ENCODE measurements at regions of chr7 and their contacts with region 1.

Region 1: GRCh38 chr7:131107337-131108211 is 220.1 kb upstream of the MKLN1 start:
- DNase-seq: peak; percentile 57
- ATAC-seq: peak; percentile 40
- H3K4me3 ChIP-seq: peak overlapping the region; percentile 68 to 94
- H3K27ac ChIP-seq: peak overlapping the region; percentile 98
- H3K4me1 ChIP-seq: peaks cover 36% of the 10 kb centered on the region
- H3K27me3 ChIP-seq: no peaks in the 10 kb centered on the region
- CTCF ChIP-seq: no peak

Region 2: DNA sequence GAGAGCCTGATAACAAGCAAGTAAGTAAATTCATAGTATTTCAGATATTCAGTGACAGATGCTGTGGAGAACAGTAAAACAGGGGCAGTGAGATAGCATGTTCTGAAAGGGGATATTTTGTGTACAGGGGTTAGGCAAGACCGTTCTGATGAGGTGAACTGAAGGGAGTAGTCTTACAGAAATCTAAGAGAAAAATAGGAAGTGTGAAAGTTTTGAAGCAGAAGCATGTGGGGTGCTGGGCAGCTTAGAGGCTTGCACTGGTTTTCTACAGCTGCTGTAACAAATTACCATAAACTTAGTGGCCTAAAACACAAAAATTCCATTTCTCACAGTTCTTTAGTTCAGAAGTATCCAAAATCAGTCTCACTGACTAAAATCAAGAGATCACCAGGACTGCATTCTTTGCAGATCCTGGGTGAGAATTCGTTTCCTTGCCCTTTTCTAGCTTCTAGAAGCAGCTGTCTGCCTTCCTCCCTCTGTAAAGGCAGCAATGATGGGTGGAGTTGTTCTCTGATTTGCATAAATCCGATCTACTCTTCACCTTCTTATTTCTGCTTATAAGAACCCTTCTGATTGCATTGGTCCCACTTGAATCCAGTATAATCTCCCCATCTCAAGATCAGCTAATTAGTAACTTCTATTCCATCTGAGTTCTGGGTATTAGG is 366.1 kb before region 1 on chr7:
- CTCF ChIA-PET with region 1: no interaction called
- POLR2A ChIA-PET with region 1: no interaction called
- in situ Hi-C with region 1: no loop called
- intact Hi-C with region 1: no loop called
- DNase-seq: no peak
- ATAC-seq: no peak
- H3K4me3 ChIP-seq: no peak overlapping the region
- H3K27ac ChIP-seq: no peak overlapping the region
- H3K4me1 ChIP-seq: no peaks in the 10 kb centered on the region
- H3K27me3 ChIP-seq: peaks cover 68% of the 10 kb centered on the region
- CTCF ChIP-seq: no peak

Region 3: GRCh38 chr7:131302876-131303707 is 195.5 kb after region 1 on chr7:
- CTCF ChIA-PET with region 1: no interaction called
- POLR2A ChIA-PET with region 1: no interaction called
- in situ Hi-C with region 1: no loop called
- intact Hi-C with region 1: loop called (anchors 5 kb)
- DNase-seq: no peak
- ATAC-seq: peak; percentile 83
- H3K4me3 ChIP-seq: no peak overlapping the region
- H3K27ac ChIP-seq: no peak overlapping the region
- H3K4me1 ChIP-seq: peaks cover 5% of the 10 kb centered on the region; the same call in 1 of the 2 replicates
- H3K27me3 ChIP-seq: no peaks in the 10 kb centered on the region
- CTCF ChIP-seq: peak; percentile 81

Region 4: DNA sequence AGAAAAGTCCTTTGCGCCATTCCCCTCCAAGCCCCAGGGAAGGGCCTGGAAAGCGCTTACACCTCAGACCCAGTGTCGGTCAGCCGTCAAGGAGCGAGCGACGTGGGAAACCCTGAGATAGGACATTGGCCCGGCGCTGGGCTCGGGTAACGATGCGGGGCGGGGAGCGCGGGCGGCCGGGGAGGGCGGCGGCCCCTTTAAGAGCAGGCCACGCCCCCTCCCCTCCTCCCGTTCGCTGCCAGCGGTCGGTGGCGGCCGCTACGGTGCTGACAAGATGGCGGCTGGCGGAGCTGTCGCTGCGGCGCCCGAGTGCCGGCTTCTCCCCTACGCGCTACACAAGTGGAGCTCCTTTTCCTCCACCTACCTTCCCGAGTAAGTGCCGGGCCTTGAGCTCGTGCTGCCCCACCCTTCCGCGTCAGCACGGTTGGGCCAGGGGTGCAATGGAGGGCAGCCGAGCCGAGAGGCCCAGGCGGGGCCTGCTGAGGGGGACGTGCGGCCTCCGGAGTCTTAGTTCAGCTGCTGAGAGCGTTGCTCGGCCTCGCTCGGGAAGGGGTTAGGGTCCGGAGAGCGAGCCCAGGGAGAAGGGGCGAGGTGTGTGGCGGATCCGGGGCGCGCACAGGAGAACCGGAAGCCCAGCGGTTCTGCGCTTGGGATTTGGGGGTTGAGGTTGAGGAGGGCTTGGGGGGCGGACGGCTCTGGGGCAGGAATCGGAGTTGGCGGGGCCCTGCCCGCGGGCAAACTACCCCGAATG is 220.2 kb after region 1 on chr7 and contains the start of gene MKLN1:
- CTCF ChIA-PET with region 1: no interaction called
- POLR2A ChIA-PET with region 1: interaction called, 4 read pairs
- in situ Hi-C with region 1: no loop called
- intact Hi-C with region 1: loop called (anchors 2 kb)
- DNase-seq: peak; percentile 53
- ATAC-seq: peak; percentile 96
- H3K4me3 ChIP-seq: peak within 1 kb of the TSS; percentile 85 to 93
- H3K27ac ChIP-seq: peak within 1 kb of the TSS; percentile 98
- H3K4me1 ChIP-seq: peaks cover 43% of the 10 kb centered on the region
- H3K27me3 ChIP-seq: no peaks in the 10 kb centered on the region
- CTCF ChIP-seq: no peak
- total RNA-seq, gene MKLN1: 46.4 TPM

Region 5: DNA sequence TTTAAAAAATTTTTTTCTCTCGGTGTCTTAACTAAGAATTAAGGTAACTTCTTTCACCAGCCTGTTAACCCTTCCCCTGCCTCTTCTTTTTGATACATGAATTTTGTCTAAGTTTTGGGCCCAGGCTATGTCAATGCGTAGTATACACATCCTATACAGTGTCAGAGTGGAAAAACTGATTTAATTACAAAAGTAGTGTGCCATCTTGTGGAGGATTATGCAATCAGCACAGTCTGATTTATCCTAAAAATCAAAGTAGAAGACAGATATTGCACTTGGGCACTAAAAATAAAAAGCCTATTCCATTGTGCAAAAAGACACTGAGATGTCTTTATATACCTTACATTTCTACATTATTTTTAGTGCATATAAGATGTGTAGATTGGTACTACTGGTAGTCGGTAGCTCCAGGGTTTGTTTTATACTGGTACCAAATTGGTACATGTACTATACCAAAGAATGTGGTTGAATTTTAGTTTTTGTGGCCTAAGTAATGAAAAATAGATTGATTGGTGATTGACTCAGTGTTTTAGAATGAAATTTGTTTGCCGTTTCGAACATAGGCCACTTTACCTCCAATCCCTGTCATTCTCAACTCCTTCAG is 316.7 kb after region 1 on chr7:
- CTCF ChIA-PET with region 1: no interaction called
- POLR2A ChIA-PET with region 1: no interaction called
- in situ Hi-C with region 1: no loop called
- intact Hi-C with region 1: loop called (anchors 10 kb)
- DNase-seq: peak; percentile 30
- ATAC-seq: peak; percentile 90
- H3K4me3 ChIP-seq: no peak overlapping the region
- H3K27ac ChIP-seq: no peak overlapping the region
- H3K4me1 ChIP-seq: no peaks in the 10 kb centered on the region
- H3K27me3 ChIP-seq: no peaks in the 10 kb centered on the region
- CTCF ChIP-seq: peak; percentile 71; the same call in 1 of the 2 replicates